GM12878 (cell line): ENCODE measurements at regions of chr20 and their contacts with region 1.

Region 1: GRCh38 chr20:34129518-34130162 is 17.6 kb upstream of the EIF2S2 start:
- DNase-seq: peak; percentile 9
- ATAC-seq: peak; percentile 96
- H3K4me3 ChIP-seq: no peak overlapping the region
- H3K27ac ChIP-seq: no peak overlapping the region
- H3K4me1 ChIP-seq: peaks cover 1% of the 10 kb centered on the region; the same call in 1 of the 2 replicates
- H3K27me3 ChIP-seq: peaks cover 0 to 2% of the 10 kb centered on the region in 2 experiments; a peak in 2 of 4 replicates
- CTCF ChIP-seq: peak; percentile 73 to 90 (median 76)
- EP300 ChIP-seq: no peak
- POLR2A ChIP-seq: no peak
- RAD21 ChIP-seq: peak; percentile 97

Region 2: GRCh38 chr20:33791959-33792597 is 337.6 kb before region 1 on chr20:
- CTCF ChIA-PET with region 1: interaction called, 6 read pairs
- POLR2A ChIA-PET with region 1: no interaction called
- RAD21 ChIA-PET with region 1: no interaction called
- SMC1A ChIA-PET with region 1: no interaction called
- in situ Hi-C with region 1: no loop called
- intact Hi-C with region 1: loop called (anchors 5 kb)
- DNase-seq: no peak
- ATAC-seq: peak; percentile 82
- H3K4me3 ChIP-seq: no peak overlapping the region
- H3K27ac ChIP-seq: no peak overlapping the region
- H3K4me1 ChIP-seq: no peaks in the 10 kb centered on the region
- H3K27me3 ChIP-seq: no peaks in the 10 kb centered on the region
- CTCF ChIP-seq: peak; percentile 56 to 78 (median 69)
- EP300 ChIP-seq: no peak
- POLR2A ChIP-seq: no peak
- RAD21 ChIP-seq: peak; percentile 65

Region 3: DNA sequence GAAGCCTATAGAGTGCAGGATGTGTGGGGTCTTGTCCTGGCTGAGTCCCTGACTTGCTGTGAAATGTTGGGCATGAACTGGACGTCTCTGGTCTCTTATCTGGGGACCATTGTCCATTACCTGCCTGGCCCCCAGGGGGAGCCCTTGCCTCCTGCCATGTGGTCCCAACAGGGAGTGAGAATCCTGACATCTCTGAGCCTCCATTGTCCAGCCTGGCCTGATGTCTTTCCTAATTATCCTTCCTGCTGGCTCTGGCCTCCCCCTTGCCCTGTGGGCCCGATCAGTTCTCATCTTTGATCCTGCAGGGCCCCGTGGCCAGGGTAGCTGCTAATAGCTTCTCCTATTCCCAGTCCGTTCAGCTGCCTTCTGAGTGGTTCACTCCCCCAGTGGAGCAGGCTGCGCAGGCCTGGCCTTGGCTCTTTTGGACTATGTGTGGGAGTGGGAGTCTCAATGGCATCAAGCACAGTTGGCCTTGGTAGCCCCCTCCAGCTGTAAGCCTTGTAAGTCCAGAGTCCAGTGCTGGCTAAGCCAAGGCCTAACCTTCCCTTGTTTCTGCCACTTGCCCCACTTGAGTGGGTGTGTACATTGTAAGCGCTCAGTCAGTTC is 213.8 kb before region 1 on chr20:
- CTCF ChIA-PET with region 1: interaction called, 43 read pairs
- POLR2A ChIA-PET with region 1: no interaction called
- RAD21 ChIA-PET with region 1: interaction called, 8 read pairs
- SMC1A ChIA-PET with region 1: interaction called, 4 read pairs
- in situ Hi-C with region 1: no loop called
- intact Hi-C with region 1: loop called (anchors 5 kb)
- DNase-seq: no peak
- ATAC-seq: peak; percentile 83
- H3K4me3 ChIP-seq: no peak overlapping the region
- H3K27ac ChIP-seq: no peak overlapping the region
- H3K4me1 ChIP-seq: peaks cover 11% of the 10 kb centered on the region
- H3K27me3 ChIP-seq: no peaks in the 10 kb centered on the region
- CTCF ChIP-seq: peak; percentile 63 to 84 (median 70)
- EP300 ChIP-seq: no peak
- POLR2A ChIP-seq: no peak
- RAD21 ChIP-seq: peak; percentile 21; the same call in 1 of the 2 replicates

Region 4: DNA sequence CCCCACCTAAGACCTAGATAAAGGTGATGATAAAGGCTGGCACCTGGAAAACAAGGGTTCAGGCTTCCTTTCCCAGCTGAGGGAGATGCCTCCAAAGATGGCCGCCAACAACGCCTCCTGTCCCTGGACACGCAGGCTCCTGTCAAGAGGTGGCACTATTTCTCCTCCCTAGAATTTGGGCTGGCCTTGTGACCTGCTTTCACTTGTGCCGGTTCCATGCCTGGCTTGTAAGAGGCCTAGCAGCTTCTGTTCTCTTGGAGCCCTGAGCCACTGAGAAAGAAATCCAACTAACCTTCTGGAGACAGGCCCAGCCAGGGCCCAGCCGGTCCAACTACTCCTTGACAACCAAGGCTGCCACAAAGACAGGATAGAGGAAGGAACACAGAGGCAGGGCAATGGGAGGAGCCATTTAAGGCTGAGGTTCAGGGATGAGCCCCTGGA is 196.2 kb before region 1 on chr20:
- CTCF ChIA-PET with region 1: interaction called, 7 read pairs
- POLR2A ChIA-PET with region 1: no interaction called
- RAD21 ChIA-PET with region 1: interaction called, 3 read pairs
- SMC1A ChIA-PET with region 1: interaction called, 4 read pairs
- in situ Hi-C with region 1: no loop called
- intact Hi-C with region 1: loop called (anchors 2 kb)
- DNase-seq: no peak
- ATAC-seq: peak; percentile 87
- H3K4me3 ChIP-seq: no peak overlapping the region
- H3K27ac ChIP-seq: no peak overlapping the region
- H3K4me1 ChIP-seq: no peaks in the 10 kb centered on the region
- H3K27me3 ChIP-seq: no peaks in the 10 kb centered on the region
- CTCF ChIP-seq: peak; percentile 50 to 61 (median 58); a peak in 5 of 6 replicates
- EP300 ChIP-seq: no peak
- POLR2A ChIP-seq: no peak
- RAD21 ChIP-seq: peak; percentile 87

Region 5: DNA sequence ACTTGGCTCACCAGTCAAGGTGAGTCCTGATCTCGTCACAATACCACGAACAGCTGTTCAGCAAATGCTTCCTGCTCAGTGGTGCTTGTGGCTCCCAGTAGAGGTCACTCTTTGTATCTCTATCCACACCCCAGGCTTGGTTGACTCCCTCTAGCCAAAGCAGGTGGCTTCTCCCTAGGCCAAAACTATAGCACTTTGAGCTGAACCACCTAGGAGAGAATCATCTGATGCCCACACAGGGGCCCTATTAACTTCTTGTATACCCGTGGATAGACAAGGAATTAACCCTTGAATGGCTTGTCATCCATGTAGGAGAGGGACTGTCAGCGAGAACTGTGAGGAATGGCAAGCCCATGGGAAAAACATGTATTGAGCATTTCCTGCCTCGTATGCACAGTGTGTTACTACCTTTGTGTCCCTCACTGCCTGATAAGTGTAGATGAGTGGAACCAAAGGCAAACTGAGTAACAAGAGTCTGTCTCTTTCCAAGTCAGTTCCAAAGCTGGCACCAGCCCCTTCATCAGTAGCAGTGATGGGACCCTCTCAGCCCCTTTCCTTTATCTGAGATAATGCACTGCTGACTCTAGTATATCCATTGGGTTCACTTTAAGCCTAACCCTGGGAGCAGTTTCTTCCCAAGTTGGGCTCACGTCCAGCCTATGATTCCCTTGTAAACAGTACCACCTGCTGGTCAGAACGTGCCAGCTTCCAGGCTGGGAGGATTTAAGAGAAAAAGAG is 60.1 kb before region 1 on chr20:
- CTCF ChIA-PET with region 1: interaction called, 10 read pairs
- POLR2A ChIA-PET with region 1: no interaction called
- RAD21 ChIA-PET with region 1: interaction called, 8 read pairs
- SMC1A ChIA-PET with region 1: interaction called, 3 read pairs
- in situ Hi-C with region 1: no loop called
- intact Hi-C with region 1: loop called (anchors 1 kb)
- DNase-seq: peak; percentile 30
- ATAC-seq: peak; percentile 97
- H3K4me3 ChIP-seq: no peak overlapping the region
- H3K27ac ChIP-seq: no peak overlapping the region
- H3K4me1 ChIP-seq: no peaks in the 10 kb centered on the region
- H3K27me3 ChIP-seq: no peaks in the 10 kb centered on the region
- CTCF ChIP-seq: peak; percentile 76 to 86 (median 78)
- EP300 ChIP-seq: no peak
- POLR2A ChIP-seq: no peak
- RAD21 ChIP-seq: peak; percentile 91

Region 6: DNA sequence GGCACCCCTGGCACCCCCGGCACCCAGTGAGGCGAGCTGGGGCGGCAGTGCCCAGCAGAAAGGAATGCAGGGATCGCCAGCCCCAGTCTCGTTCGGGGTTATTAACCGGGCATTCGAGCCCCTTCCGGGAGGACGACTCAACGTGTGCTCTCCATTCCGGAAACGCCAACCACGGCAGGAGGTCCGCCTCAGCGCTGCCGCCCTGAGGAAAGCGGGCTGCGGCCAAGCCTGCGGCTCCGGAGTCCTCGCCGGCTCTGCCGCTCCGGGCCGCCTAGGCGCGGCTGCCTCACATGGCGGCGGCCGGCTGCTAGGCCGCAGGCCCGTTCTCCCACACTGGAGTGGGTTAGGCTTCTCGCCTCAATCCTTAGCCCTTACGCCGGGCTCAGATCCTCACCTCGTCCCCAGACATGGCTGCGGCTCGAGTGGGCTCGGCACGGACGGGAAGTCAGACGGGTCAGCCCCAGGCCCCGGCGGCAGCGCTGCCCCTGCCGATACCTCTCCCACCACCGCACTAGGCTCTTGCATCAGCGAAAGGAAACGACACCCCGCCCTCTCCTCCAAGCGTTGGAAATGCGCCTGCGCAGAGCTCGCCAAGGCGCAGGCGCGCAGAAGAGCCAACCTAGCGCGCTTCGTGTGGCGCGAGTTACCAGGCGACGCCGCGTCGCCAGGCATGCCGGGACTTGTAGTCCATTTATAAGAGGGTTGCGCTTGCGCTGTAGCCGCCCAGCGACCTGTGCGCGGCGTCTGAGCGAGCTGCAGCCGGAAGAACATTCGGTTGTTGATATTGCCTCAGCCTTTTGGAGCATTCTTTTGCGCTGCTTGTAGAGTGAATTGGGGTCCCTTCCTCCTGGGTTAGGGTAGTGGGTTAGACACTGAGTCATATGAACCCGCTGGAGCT is 17.7 kb before region 1 on chr20 and contains the start of gene EIF2S2:
- CTCF ChIA-PET with region 1: interaction called, 5 read pairs
- POLR2A ChIA-PET with region 1: interaction called, 6 read pairs
- RAD21 ChIA-PET with region 1: interaction called, 4 read pairs
- SMC1A ChIA-PET with region 1: interaction called, 12 read pairs
- in situ Hi-C with region 1: no loop called
- intact Hi-C with region 1: no loop called
- DNase-seq: peak; percentile 95
- ATAC-seq: peak; percentile 93
- H3K4me3 ChIP-seq: peak within 1 kb of the TSS; percentile 84
- H3K27ac ChIP-seq: peak within 1 kb of the TSS; percentile 92
- H3K4me1 ChIP-seq: peaks cover 4% of the 10 kb centered on the region
- H3K27me3 ChIP-seq: no peaks in the 10 kb centered on the region
- CTCF ChIP-seq: no peak
- EP300 ChIP-seq: no peak
- POLR2A ChIP-seq: peak; percentile 97
- RAD21 ChIP-seq: no peak
- polyA plus RNA-seq, gene EIF2S2: 60.2 to 103 TPM

Region 7: DNA sequence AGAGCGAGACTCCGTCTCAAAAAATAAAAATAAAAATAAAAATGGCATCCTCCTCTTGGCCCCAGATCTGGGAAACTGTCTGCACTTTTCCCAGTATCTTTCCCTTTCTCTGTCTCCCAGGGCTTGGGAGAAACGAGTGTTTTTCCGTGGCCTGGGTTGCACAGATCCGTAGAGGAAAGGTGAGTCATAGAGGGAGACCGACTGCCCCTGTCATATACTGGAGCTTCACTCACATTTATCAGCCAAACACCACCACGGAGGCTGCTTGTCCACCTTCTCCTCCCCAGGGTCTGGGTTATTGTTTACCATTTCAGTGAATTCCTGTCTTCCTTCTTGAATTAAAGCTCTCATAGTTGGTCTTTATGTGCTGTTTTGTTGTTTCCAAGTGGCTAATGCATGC is 14.3 kb after region 1 on chr20:
- CTCF ChIA-PET with region 1: no interaction called
- POLR2A ChIA-PET with region 1: no interaction called
- RAD21 ChIA-PET with region 1: no interaction called
- SMC1A ChIA-PET with region 1: no interaction called
- in situ Hi-C with region 1: no loop called
- intact Hi-C with region 1: no loop called
- DNase-seq: no peak
- ATAC-seq: no peak
- H3K4me3 ChIP-seq: no peak overlapping the region
- H3K27ac ChIP-seq: no peak overlapping the region
- H3K4me1 ChIP-seq: no peaks in the 10 kb centered on the region
- H3K27me3 ChIP-seq: no peaks in the 10 kb centered on the region
- CTCF ChIP-seq: no peak
- EP300 ChIP-seq: no peak
- POLR2A ChIP-seq: no peak
- RAD21 ChIP-seq: no peak

Region 8: DNA sequence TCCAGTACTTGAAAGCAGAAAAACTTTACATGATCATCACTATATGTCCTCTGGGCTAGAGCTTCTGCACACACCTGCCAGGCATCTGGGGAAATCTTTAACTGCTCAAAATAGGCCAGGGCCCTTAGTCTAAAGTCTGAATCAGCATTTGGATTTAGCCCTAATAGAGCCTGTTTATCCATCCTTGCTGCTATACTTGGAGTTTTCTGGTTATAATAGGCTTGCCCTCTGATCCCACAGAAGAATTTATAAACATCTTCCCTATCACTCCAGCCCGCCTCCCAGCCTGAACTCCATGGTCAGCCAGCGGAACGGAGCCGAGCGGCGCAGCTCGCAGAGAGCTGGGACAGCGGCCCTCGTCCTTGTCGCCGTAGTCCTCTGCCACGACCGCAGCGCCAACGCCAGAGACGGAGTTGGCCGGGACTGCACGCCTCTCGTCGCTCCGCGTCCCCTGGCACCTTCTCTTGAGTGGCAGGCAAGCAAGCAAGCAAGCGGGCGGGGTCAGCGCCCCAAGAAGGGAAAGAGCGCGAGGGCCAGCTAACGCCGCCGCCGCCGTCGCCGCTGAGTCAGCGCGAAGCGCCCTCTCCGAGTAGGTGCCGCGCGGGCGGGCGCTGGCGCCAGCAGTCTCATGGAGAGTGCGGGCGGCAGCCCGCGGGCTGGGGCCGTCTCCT is 86.2 kb after region 1 on chr20:
- CTCF ChIA-PET with region 1: no interaction called
- POLR2A ChIA-PET with region 1: no interaction called
- RAD21 ChIA-PET with region 1: no interaction called
- SMC1A ChIA-PET with region 1: no interaction called
- in situ Hi-C with region 1: no loop called
- intact Hi-C with region 1: no loop called
- DNase-seq: no peak
- ATAC-seq: peak; percentile 22; the same call in 2 of the 3 replicates
- H3K4me3 ChIP-seq: no peak overlapping the region
- H3K27ac ChIP-seq: no peak overlapping the region
- H3K4me1 ChIP-seq: no peaks in the 10 kb centered on the region
- H3K27me3 ChIP-seq: peaks cover 0 to 3% of the 10 kb centered on the region in 2 experiments; a peak in 2 of 4 replicates
- CTCF ChIP-seq: no peak
- EP300 ChIP-seq: no peak
- POLR2A ChIP-seq: no peak
- RAD21 ChIP-seq: no peak

Region 9: GRCh38 chr20:34262488-34263288 is 133.0 kb after region 1 on chr20:
- CTCF ChIA-PET with region 1: no interaction called
- POLR2A ChIA-PET with region 1: no interaction called
- RAD21 ChIA-PET with region 1: no interaction called
- SMC1A ChIA-PET with region 1: no interaction called
- in situ Hi-C with region 1: no loop called
- intact Hi-C with region 1: no loop called
- DNase-seq: no peak
- ATAC-seq: no peak; the same call in 2 of the 3 replicates
- H3K4me3 ChIP-seq: no peak overlapping the region
- H3K27ac ChIP-seq: no peak overlapping the region; the same call in 1 of the 2 replicates
- H3K4me1 ChIP-seq: peaks cover 5% of the 10 kb centered on the region; the same call in 1 of the 2 replicates
- H3K27me3 ChIP-seq: no peaks in the 10 kb centered on the region
- CTCF ChIP-seq: no peak
- EP300 ChIP-seq: no peak
- POLR2A ChIP-seq: no peak
- RAD21 ChIP-seq: no peak